ENCODE measurements at regions of chr4 and their contacts with region 1.

Region 1: DNA sequence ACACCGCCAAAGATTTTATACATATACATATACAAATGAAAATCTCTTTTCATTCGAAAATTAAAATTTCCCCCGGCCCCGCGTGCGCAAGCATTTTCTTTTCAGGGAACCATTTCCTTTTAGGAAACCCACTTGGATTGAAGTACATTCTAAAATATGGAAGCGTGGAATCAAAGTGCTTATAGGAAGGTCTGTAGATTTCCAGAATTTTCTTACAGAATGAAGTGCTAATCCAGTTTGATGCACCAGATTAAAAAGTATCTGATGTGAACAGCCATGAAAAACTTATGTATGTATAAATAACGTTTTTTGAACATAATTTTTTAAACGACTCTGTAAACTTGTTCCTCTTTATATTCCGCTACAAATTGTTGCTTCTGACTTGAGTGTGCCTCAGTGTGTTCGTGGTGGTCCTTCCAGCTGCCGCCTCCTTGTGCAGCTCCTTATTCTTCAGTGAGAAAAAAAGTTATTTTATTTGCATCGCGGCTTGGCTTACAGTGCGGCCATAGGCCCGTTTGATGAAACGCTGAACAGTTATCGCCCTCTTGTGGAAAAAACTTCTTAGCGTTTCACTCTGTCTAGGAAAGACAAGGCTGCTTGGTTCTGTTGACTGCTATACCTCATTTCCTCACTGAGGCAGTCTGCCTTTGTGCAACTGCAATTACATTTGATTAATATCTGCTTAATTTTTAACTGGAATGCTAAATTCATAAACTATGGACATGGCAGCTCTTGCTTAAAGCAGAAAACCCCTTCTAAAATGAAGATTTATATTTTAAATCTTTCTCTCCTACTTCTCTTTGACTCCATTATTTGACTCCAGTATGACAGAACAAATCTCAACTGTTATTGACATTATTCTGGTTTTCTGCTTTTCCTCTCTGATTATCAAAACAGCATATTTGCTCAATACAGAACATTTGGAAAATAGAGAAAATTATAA is 4.7 kb upstream of the NKX6-1 start:
- DNase-seq: no peak
- H3K4me3 Mint-ChIP-seq: no peak overlapping the region
- H3K27ac Mint-ChIP-seq: no peak overlapping the region
- H3K4me1 Mint-ChIP-seq: peaks cover 3% of the 10 kb centered on the region
- H3K27me3 Mint-ChIP-seq: peaks cover 79% of the 10 kb centered on the region

Region 2: GRCh38 chr4:84479663-84480062 is 24.1 kb before region 1 on chr4:
- CTCF ChIA-PET with region 1: no interaction called
- POLR2A ChIA-PET with region 1: no interaction called
- intact Hi-C with region 1: loop called (anchors 2 kb)
- DNase-seq: no peak
- H3K4me3 Mint-ChIP-seq: no peak overlapping the region
- H3K27ac Mint-ChIP-seq: no peak overlapping the region
- H3K4me1 Mint-ChIP-seq: peaks cover 12% of the 10 kb centered on the region
- H3K27me3 Mint-ChIP-seq: peaks cover 62% of the 10 kb centered on the region

Region 3: GRCh38 chr4:84547211-84547610 is 43.4 kb after region 1 on chr4:
- CTCF ChIA-PET with region 1: no interaction called
- POLR2A ChIA-PET with region 1: no interaction called
- intact Hi-C with region 1: no loop called
- DNase-seq: no peak
- H3K4me3 Mint-ChIP-seq: no peak overlapping the region
- H3K27ac Mint-ChIP-seq: no peak overlapping the region
- H3K4me1 Mint-ChIP-seq: no peaks in the 10 kb centered on the region
- H3K27me3 Mint-ChIP-seq: peaks cover 3% of the 10 kb centered on the region